ENCODE measurements at regions of chr1 and their contacts with region 1.

Region 1: DNA sequence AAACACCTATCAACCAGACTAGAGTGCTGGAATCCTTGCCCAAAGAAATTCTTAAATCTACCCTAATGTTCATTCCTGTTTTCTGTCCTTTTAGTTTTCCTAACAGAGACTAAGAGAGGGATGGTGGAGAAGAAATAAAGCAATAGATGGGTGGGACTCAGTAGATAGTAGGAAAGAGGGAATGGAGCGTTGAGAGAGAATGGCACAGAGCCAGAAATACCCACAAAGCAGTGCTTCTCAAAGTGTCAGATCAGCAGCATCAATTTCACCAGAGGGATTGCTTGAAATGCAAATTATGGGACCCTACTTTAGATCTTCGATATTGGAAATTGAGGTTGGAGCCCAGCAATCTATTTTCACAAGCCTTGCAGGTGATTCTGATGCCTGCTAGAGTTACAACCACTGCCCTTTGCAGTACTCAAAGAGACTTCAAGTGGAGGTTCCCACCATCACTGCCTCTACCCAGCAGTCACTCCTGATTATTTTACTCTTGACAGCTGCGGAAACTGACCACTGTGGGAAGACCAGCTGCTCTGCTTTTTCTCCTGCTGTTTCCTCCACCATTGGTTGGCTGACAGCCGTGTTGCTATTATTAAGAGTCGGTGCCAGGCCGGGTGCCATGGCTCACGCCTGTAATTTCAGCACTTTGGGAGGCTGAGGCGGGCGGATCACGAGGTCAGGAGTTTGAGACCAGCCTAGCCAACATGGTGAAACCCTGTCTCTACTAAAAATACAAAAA is 11.4 kb upstream of the PRPF3 start:
- DNase-seq: no peak
- ATAC-seq: peak in 2 of 4 donors; percentile 12 to 21
- H3K4me3 ChIP-seq: no peak overlapping the region
- H3K27ac ChIP-seq: no peak overlapping the region
- H3K4me1 ChIP-seq: no peaks in the 10 kb centered on the region
- H3K27me3 ChIP-seq: no peaks in the 10 kb centered on the region
- CTCF ChIP-seq: no peak

Region 2: GRCh38 chr1:150352866-150353265 is 42.9 kb after region 1 on chr1:
- intact Hi-C with region 1: loop called in 1 of 2 experiments (anchors 10 kb)
- DNase-seq: no peak
- ATAC-seq: peak in 1 of 4 donors; percentile 20
- H3K4me3 ChIP-seq: no peak overlapping the region
- H3K27ac ChIP-seq: no peak overlapping the region
- H3K4me1 ChIP-seq: no peaks in the 10 kb centered on the region
- H3K27me3 ChIP-seq: no peaks in the 10 kb centered on the region
- CTCF ChIP-seq: no peak

Region 3: DNA sequence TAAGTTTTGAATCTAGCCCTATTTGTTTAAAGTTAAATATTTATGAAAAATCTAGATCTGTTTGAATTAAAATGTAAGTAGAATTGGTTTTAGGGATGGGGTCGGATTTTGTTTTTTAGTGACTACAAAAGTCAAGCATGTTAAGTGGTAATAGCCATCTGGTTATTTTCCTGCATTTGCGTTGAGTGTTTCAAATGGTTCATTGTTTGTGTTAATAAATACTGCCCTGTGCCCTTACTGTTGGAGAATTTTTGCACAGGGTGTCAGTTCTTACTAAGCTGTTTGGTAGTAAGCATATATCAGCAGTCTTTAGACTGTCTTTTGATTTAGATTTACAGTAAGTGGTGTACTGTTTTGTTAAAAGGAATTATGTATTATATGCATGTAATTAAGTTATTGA is 131.2 kb after region 1 on chr1:
- intact Hi-C with region 1: no loop called
- DNase-seq: no peak
- ATAC-seq: no peak
- H3K4me3 ChIP-seq: no peak overlapping the region
- H3K27ac ChIP-seq: no peak overlapping the region
- H3K4me1 ChIP-seq: no peaks in the 10 kb centered on the region
- H3K27me3 ChIP-seq: no peaks in the 10 kb centered on the region
- CTCF ChIP-seq: no peak